Heart left ventricle (tissue), 16 donors: ENCODE measurements at regions of chr6 and their contacts with region 1.

Region 1: DNA sequence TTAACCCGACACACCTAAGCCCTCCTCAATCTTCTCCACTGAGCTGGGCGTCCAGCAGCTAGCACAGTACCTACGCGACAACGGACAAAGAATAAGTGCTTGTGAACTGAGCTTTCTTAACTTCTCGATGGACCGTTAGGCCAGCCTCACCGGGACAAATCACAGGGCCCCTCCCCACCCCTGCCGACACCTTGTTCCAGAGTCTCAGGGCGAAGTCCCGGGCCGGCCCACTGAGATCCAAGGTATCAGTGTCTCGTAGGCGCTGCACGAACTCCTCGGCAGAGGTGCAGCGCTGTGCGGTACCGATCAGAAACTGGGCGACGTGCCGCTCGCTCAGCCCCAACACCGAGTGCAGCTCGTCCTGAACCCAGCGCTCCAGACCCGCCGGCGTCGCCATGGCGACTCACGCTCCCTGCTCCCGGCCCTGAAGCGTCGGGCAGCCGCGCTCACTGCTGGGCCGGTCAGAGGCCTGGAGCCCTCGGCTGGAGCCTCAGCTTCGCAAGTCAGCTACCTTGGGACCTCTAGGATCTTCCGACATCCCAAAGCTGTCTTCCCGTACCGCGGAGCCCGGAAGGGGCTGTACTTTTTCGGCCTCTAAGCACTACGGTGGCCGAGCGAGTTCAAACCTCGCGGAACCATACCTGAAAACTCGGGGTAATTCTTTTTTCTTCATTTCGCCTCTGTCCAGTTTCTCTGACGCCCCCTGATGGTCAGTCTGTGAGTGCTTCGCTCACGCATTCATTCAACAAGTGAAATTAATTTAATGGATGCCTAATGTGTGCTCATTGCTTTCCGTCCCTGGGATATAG is at the start of gene DHX16:
- DNase-seq: peak; percentile 97 to 98 (median 97)
- ATAC-seq: peak; percentile 64 to 93 (median 91)
- H3K4me3 ChIP-seq: peak within 1 kb of the TSS; percentile 76 to 98 (median 94)
- H3K27ac ChIP-seq: peak within 1 kb of the TSS in 11 of 12 donors; percentile 66 to 85 (median 79)
- H3K4me1 ChIP-seq: peaks cover 0 to 24% (median 15%) of the 10 kb centered on the region in 12 donors
- H3K27me3 ChIP-seq: no peaks in the 10 kb centered on the region
- CTCF ChIP-seq: peak; percentile 77 to 97 (median 85)
- POLR2A ChIP-seq: peak in 1 of 2 donors; percentile 48
- total RNA-seq, gene DHX16: 17.6 to 26.1 (median 21.0) TPM

Region 2: GRCh38 chr6:30304002-30304401 is 368.6 kb before region 1 on chr6:
- intact Hi-C with region 1: no loop called
- DNase-seq: no peak
- ATAC-seq: no peak
- H3K4me3 ChIP-seq: no peak overlapping the region
- H3K27ac ChIP-seq: no peak overlapping the region
- H3K4me1 ChIP-seq: no peaks in the 10 kb centered on the region
- H3K27me3 ChIP-seq: no peaks in the 10 kb centered on the region
- CTCF ChIP-seq: no peak
- POLR2A ChIP-seq: no peak

Region 3: GRCh38 chr6:30489081-30490025 is 183.3 kb before region 1 on chr6 and contains the start of gene HLA-E:
- intact Hi-C with region 1: loop called in 8 of 10 experiments (anchors 5 to 10 kb)
- DNase-seq: peak; percentile 91 to 95 (median 93)
- ATAC-seq: peak; percentile 93 to 98 (median 96)
- H3K4me3 ChIP-seq: peak within 1 kb of the TSS; percentile 64 to 99 (median 94)
- H3K27ac ChIP-seq: peak within 1 kb of the TSS; percentile 92 to 100 (median 96)
- H3K4me1 ChIP-seq: peaks cover 0 to 45% (median 19%) of the 10 kb centered on the region in 12 donors
- H3K27me3 ChIP-seq: no peaks in the 10 kb centered on the region
- CTCF ChIP-seq: no peak
- POLR2A ChIP-seq: peak; percentile 71 to 99
- total RNA-seq, gene HLA-E: 96.1 to 560 (median 162) TPM

Region 4: DNA sequence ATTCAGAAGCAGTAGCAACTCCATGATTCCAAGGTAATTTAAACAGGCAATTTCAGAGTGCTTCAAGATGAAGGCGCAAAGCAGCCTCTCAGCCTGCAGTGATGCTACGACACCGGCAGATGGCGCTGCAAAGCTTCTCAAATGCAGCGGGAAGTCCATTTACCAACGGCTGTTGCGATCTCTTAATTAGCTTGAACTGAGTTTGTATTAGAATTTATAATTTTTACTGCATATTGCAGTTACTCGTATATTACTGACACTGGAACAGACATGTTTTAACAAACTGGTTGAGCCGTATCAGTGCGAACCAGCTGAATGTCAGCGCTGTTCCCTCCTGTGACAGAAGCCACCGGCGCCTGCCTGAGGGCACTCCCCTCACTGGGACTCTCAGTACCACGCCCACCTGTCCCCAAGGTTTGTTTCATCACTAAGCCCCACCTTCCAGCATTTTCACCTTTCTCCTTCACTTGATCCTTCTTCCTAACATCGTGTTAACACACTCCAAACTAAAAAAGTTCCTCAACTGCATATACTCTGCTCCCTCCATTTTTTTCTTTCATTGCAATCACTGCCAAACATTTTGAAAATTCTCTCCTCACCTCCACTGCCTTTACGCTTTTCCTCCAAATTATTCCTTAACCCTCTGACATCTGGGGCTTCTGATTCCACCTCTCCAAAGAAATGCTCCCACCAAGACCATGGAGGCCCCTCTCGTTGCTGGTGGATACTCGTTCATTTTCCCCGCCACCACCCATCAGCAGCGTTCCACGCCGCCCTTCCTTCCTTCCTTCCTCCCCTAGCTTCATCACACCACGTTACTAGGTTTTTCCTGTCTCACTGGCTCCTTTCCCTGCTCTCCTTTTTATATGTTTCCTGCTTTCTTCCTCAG is 130.9 kb before region 1 on chr6:
- intact Hi-C with region 1: loop called in 2 of 10 experiments (anchors 5 to 10 kb)
- DNase-seq: peak; percentile 69 to 86 (median 77)
- ATAC-seq: peak; percentile 63 to 82 (median 72)
- H3K4me3 ChIP-seq: peak overlapping the region in 11 of 12 donors; percentile 22 to 54 (median 44)
- H3K27ac ChIP-seq: peak overlapping the region; percentile 1 to 80 (median 63)
- H3K4me1 ChIP-seq: peaks cover 0 to 32% (median 9%) of the 10 kb centered on the region in 12 donors
- H3K27me3 ChIP-seq: no peaks in the 10 kb centered on the region
- CTCF ChIP-seq: peak; percentile 94 to 100 (median 99)
- POLR2A ChIP-seq: no peak

Region 5: GRCh38 chr6:30616811-30617564 is 55.7 kb before region 1 on chr6 and contains the start of gene PPP1R10:
- intact Hi-C with region 1: loop called in 1 of 10 experiments (anchors 5 kb)
- DNase-seq: peak; percentile 97 to 100 (median 100)
- ATAC-seq: peak; percentile 87 to 92 (median 92)
- H3K4me3 ChIP-seq: peak within 1 kb of the TSS; percentile 57 to 92 (median 78)
- H3K27ac ChIP-seq: peak within 1 kb of the TSS; percentile 94 to 99 (median 97)
- H3K4me1 ChIP-seq: peaks cover 0 to 42% (median 37%) of the 10 kb centered on the region in 12 donors
- H3K27me3 ChIP-seq: no peaks in the 10 kb centered on the region
- CTCF ChIP-seq: no peak
- POLR2A ChIP-seq: peak; percentile 99
- total RNA-seq, gene PPP1R10: 21.7 to 44.9 (median 29.9) TPM

Region 6: DNA sequence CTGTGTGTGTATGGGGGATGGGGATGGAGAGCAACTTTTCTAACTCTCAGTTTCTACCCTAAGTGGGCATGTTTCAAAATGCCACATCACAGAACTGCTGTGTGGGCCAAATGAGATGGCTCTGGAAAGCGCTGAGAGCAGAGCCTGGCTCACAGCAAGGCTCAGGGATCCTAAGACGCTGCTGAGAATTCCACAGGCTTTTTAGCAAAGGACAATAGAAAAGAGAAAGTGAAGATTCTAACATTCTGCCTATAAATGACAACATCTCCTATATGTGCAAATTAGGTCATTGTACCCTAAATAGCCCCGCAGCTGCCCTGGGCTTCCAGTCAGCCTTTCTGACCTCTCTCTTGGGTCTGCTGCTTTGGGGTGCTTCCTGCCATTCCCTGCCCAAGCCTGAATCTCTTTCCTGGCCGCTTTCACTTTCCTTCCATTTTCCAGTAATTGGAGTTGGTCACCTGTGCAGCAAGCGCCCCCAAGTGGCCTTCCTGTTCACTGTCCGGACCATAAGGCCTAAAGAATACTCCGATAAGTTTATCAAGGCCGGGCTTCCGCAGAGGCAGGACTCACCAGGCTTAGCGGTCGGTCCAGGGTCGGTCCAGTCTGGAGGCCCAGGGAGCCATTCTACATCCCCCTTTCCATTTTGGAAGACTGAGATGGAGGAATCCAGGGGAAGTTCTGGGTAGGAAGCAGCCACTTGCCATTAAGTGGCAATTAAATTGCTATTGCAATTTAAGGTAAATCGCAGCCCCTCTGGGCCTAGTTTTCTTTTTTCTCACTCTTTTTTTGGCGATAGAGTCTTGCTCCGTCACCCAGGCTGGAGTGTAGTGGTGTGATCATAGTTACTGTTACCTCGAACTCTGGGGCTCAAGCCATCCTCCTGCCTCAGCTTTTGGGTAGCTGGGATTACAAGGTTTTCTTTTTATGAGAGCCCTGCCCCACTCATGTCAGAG is 205.0 kb after region 1 on chr6:
- intact Hi-C with region 1: loop called in 3 of 10 experiments (anchors 5 to 10 kb)
- DNase-seq: peak; percentile 88 to 92 (median 89)
- ATAC-seq: peak; percentile 87 to 93 (median 90)
- H3K4me3 ChIP-seq: peak overlapping the region in 11 of 12 donors; percentile 14 to 56 (median 40)
- H3K27ac ChIP-seq: peak overlapping the region; percentile 22 to 85 (median 62)
- H3K4me1 ChIP-seq: peaks cover 0 to 32% (median 13%) of the 10 kb centered on the region in 12 donors
- H3K27me3 ChIP-seq: no peaks in the 10 kb centered on the region
- CTCF ChIP-seq: peak; percentile 77 to 95 (median 90)
- POLR2A ChIP-seq: no peak